ENCODE measurements at regions of chr5 and their contacts with region 1.

Region 1: GRCh38 chr5:11719888-11720481 is 184.3 kb downstream of the CTNND2 start:
- DNase-seq: peak; percentile 72 to 78
- H3K4me3 ChIP-seq: no peak overlapping the region
- H3K4me3 Mint-ChIP-seq: no peak overlapping the region
- H3K27ac Mint-ChIP-seq: no peak overlapping the region
- H3K4me1 ChIP-seq: no peaks in the 10 kb centered on the region
- H3K4me1 Mint-ChIP-seq: no peaks in the 10 kb centered on the region
- H3K27me3 ChIP-seq: no peaks in the 10 kb centered on the region
- H3K27me3 Mint-ChIP-seq: no peaks in the 10 kb centered on the region
- CTCF ChIP-seq: peak; percentile 64 to 69

Region 2: GRCh38 chr5:10789021-10789420 is 931.0 kb before region 1 on chr5:
- CTCF ChIA-PET with region 1: no interaction called
- POLR2A ChIA-PET with region 1: no interaction called
- intact Hi-C with region 1: no loop called
- DNase-seq: no peak
- H3K4me3 ChIP-seq: no peak overlapping the region
- H3K4me3 Mint-ChIP-seq: no peak overlapping the region
- H3K27ac Mint-ChIP-seq: no peak overlapping the region
- H3K4me1 ChIP-seq: no peaks in the 10 kb centered on the region
- H3K4me1 Mint-ChIP-seq: no peaks in the 10 kb centered on the region
- H3K27me3 ChIP-seq: no peaks in the 10 kb centered on the region
- H3K27me3 Mint-ChIP-seq: peaks cover 3% of the 10 kb centered on the region
- CTCF ChIP-seq: no peak

Region 3: GRCh38 chr5:11494340-11494739 is 225.6 kb before region 1 on chr5:
- CTCF ChIA-PET with region 1: no interaction called
- POLR2A ChIA-PET with region 1: no interaction called
- intact Hi-C with region 1: loop called (anchors 10 kb)
- DNase-seq: no peak
- H3K4me3 ChIP-seq: no peak overlapping the region
- H3K4me3 Mint-ChIP-seq: no peak overlapping the region
- H3K27ac Mint-ChIP-seq: no peak overlapping the region
- H3K4me1 ChIP-seq: peaks cover 8% of the 10 kb centered on the region; the same call in 1 of the 2 replicates
- H3K4me1 Mint-ChIP-seq: peaks cover 10% of the 10 kb centered on the region
- H3K27me3 ChIP-seq: no peaks in the 10 kb centered on the region
- H3K27me3 Mint-ChIP-seq: no peaks in the 10 kb centered on the region
- CTCF ChIP-seq: peak in 1 of 2 experiments; percentile 15

Region 4: GRCh38 chr5:11733185-11734184 is 13.5 kb after region 1 on chr5:
- CTCF ChIA-PET with region 1: no interaction called
- POLR2A ChIA-PET with region 1: no interaction called
- intact Hi-C with region 1: no loop called
- DNase-seq: no peak
- H3K4me3 ChIP-seq: no peak overlapping the region
- H3K4me3 Mint-ChIP-seq: no peak overlapping the region
- H3K27ac Mint-ChIP-seq: peak overlapping the region; percentile 13
- H3K4me1 ChIP-seq: peaks cover 7% of the 10 kb centered on the region; the same call in 1 of the 2 replicates
- H3K4me1 Mint-ChIP-seq: peaks cover 8% of the 10 kb centered on the region
- H3K27me3 ChIP-seq: no peaks in the 10 kb centered on the region
- H3K27me3 Mint-ChIP-seq: no peaks in the 10 kb centered on the region
- CTCF ChIP-seq: no peak